ENCODE measurements at regions of chr2 and their contacts with region 1.

Region 1: GRCh38 chr2:27683390-27684071 is 19.8 kb downstream of the SLC4A1AP start:
- DNase-seq: peak; percentile 75
- H3K4me3 ChIP-seq: no peak overlapping the region
- H3K27ac ChIP-seq: peak overlapping the region; percentile 39
- H3K27me3 ChIP-seq: no peaks in the 10 kb centered on the region
- CTCF ChIP-seq: peak; percentile 93

Region 2: DNA sequence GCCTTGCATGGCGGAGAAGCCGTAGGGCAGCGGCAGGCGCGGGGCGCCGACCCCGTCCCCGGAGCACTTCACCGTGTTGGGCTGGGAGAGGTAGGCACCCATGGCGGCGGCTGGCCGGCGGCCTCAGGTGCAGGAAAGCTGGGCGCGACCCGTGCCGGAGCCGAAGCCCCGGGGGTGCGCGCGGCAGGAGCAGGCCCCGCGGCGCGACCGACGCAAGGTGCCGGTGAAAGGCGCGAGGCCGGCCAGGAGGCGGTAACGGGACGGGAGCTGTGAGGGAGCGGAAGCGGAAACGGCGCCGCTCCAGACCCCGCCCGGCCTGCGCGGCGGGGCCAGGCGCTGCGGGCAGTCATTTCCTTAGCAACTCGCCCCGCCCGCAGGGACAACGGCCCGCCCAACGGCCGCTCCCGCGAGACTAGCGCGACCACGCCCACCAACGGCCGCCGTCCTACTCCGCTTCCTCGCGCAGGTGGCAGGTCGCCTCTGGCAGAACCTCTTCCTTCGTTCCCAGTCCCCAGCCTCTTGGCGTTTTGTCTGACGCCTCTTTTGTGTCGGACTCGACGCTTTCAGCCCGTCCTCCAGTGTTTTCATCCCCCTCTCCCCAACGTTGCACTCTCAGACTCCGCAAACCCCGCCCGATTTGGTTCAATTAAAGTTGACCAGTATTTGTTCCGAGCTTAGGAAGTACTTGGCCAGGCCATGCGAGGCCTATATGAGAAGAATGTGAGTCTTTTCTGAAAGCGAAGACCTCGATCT is 274.0 kb before region 1 on chr2 and contains the start of gene PPM1G:
- CTCF ChIA-PET with region 1: interaction called, 16 read pairs
- POLR2A ChIA-PET with region 1: no interaction called
- DNase-seq: peak; percentile 59
- H3K4me3 ChIP-seq: peak within 1 kb of the TSS; percentile 89
- H3K27ac ChIP-seq: peak within 1 kb of the TSS; percentile 31
- H3K27me3 ChIP-seq: peaks cover 3% of the 10 kb centered on the region
- CTCF ChIP-seq: no peak
- polyA plus RNA-seq, gene PPM1G: 48.6 and 49.5 TPM in 2 replicates

Region 3: GRCh38 chr2:27647289-27647688 is 36.2 kb before region 1 on chr2:
- CTCF ChIA-PET with region 1: interaction called, 11 read pairs
- POLR2A ChIA-PET with region 1: no interaction called
- DNase-seq: no peak
- H3K4me3 ChIP-seq: no peak overlapping the region
- H3K27ac ChIP-seq: no peak overlapping the region
- H3K27me3 ChIP-seq: no peaks in the 10 kb centered on the region
- CTCF ChIP-seq: 0 out of 2 replicates have a peak, but pooled peaks have one; percentile 19

Region 4: DNA sequence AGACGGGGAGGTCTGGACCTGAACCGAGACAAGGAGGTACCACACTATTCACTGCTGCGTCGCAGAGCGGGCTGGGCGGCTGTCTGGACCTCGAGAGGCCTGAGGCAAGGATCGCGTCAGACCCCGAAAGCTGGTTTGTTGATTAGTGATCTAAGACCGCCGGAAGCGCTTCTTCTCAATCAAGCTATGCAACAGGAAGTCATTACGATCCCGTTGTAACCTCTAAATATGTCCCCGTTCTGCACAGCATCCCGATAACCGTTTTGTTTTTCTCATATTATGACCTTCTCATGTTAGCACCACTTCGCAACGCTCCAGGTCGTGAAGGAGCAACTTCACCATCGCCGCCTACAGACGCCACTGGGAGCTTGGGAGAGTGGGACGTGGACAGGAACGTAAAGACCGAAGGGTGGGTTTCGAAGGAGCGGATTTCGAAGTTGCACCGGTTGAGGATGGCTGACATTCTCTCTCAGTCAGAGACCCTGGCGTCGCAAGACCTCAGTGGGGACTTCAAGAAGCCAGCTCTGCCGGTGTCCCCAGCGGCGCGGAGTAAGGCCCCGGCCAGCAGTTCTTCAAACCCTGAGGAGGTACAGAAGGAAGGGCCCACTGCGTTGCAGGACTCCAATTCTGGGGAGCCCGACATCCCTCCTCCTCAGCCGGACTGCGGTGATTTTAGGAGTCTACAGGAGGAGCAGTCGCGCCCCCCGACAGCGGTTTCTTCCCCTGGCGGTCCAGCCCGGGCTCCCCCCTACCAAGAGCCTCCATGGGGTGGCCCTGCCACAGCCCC is 19.9 kb before region 1 on chr2 and contains the starts of genes SLC4A1AP and SUPT7L:
- CTCF ChIA-PET with region 1: interaction called, 51 read pairs
- POLR2A ChIA-PET with region 1: interaction called, 3 read pairs
- DNase-seq: peak; percentile 61
- H3K4me3 ChIP-seq: peak within 1 kb of the TSS; percentile 95
- H3K27ac ChIP-seq: peak within 1 kb of the TSS; percentile 92
- H3K27me3 ChIP-seq: no peaks in the 10 kb centered on the region
- CTCF ChIP-seq: peak; percentile 14
- polyA plus RNA-seq, gene SLC4A1AP: 12.5 and 15.5 TPM in 2 replicates
- polyA plus RNA-seq, gene SUPT7L: 43.9 and 46.7 TPM in 2 replicates

Region 5: GRCh38 chr2:27697660-27698059 is 14.1 kb after region 1 on chr2:
- CTCF ChIA-PET with region 1: interaction called, 36 read pairs
- POLR2A ChIA-PET with region 1: no interaction called
- DNase-seq: no peak
- H3K4me3 ChIP-seq: no peak overlapping the region
- H3K27ac ChIP-seq: no peak overlapping the region
- H3K27me3 ChIP-seq: no peaks in the 10 kb centered on the region
- CTCF ChIP-seq: no peak

Region 6: GRCh38 chr2:27810455-27810854 is 126.9 kb after region 1 on chr2:
- CTCF ChIA-PET with region 1: interaction called, 11 read pairs
- POLR2A ChIA-PET with region 1: no interaction called
- DNase-seq: no peak
- H3K4me3 ChIP-seq: no peak overlapping the region
- H3K27ac ChIP-seq: no peak overlapping the region
- H3K27me3 ChIP-seq: no peaks in the 10 kb centered on the region
- CTCF ChIP-seq: no peak

Region 7: GRCh38 chr2:28452534-28453081 is 769.1 kb after region 1 on chr2:
- CTCF ChIA-PET with region 1: interaction called, 13 read pairs
- POLR2A ChIA-PET with region 1: no interaction called
- DNase-seq: no peak
- H3K4me3 ChIP-seq: no peak overlapping the region
- H3K27ac ChIP-seq: no peak overlapping the region
- H3K27me3 ChIP-seq: no peaks in the 10 kb centered on the region
- CTCF ChIP-seq: peak; percentile 90